ENCODE measurements at regions of chr6 and their contacts with region 1.

Region 1: DNA sequence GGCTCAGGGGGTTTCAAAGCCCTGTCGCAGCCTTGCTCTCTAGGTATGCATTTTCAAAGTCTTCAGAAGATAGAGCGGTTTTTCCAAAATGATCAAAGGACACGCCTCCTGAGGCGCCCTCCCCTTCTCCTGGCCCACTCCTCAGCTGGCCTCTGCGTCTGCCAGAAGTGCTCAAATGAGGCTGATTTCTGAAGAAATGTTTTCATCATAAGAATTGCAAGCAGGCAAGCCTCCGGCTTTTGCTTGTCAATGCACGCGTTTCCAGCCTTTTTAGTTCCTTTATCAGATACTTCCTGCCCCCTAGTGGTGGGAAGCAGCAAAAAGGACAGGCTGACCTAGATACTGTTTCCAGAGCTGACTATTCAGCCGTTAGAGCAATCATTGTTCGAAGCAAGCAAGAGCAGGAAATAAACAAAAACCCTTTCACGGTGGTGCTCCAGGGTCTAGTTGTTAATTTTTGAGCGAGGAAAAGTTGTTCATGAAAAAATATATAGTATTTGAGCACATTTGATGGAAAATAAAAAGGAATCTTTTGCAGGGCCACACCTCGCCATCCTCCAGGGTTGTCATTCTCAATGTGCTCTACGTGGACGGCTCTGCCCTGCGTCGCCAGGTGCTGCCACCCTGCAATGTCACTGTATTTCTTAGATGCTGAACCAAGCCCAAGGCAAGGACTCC is 93.4 kb upstream of the ASF1A start:
- DNase-seq: peak; percentile 95
- H3K4me3 Mint-ChIP-seq: peak overlapping the region; percentile 54
- H3K27ac Mint-ChIP-seq: peak overlapping the region; percentile 46
- H3K4me1 Mint-ChIP-seq: peaks cover 30% of the 10 kb centered on the region
- H3K27me3 Mint-ChIP-seq: no peaks in the 10 kb centered on the region

Region 2: DNA sequence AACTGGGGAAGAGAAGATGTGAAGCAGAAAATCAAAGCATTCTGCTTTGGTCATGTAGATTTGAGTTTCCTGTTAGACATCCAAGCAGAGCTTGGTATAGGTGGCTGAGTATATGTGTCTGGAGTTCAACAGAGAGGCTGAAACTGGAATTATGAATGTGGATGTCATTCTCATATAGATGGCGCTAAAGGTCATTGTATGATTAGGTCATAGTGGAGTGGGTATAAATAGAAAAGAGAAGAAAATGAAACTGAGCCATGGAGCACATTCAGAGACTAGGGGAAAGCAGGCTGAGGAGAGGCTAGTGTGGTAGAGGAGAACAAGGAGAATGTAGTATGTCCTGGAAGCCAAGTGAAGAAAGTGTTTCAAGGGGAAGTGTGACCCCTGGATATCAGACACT is 548.1 kb before region 1 on chr6:
- CTCF ChIA-PET with region 1: no interaction called
- intact Hi-C with region 1: no loop called
- DNase-seq: no peak
- H3K4me3 Mint-ChIP-seq: no peak overlapping the region
- H3K27ac Mint-ChIP-seq: no peak overlapping the region
- H3K4me1 Mint-ChIP-seq: peaks cover 3% of the 10 kb centered on the region
- H3K27me3 Mint-ChIP-seq: peaks cover 3% of the 10 kb centered on the region

Region 3: DNA sequence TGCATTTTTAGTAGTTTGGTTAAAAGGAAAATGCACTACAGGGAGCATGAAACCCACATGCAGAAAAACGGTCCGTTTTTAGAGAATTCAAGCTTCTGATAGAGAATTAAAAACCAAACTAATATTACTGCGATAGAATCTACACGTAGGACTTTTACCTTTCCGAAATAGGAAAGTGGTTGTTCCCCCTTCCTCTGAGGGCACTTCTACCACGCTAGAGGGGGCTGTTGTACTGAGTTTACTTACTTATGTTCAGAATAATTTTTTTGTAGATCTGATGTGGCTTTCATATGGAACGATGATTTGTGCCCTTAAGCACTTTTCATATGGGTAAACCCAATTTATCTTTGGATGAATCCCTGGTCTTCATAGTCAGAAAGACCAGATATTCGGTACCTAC is 516.8 kb before region 1 on chr6:
- CTCF ChIA-PET with region 1: interaction called, 9 read pairs
- intact Hi-C with region 1: loop called (anchors 1 kb)
- DNase-seq: peak; percentile 69
- H3K4me3 Mint-ChIP-seq: no peak overlapping the region
- H3K27ac Mint-ChIP-seq: no peak overlapping the region
- H3K4me1 Mint-ChIP-seq: peaks cover 2% of the 10 kb centered on the region
- H3K27me3 Mint-ChIP-seq: peaks cover 3% of the 10 kb centered on the region

Region 4: GRCh38 chr6:118565311-118565960 is 235.1 kb before region 1 on chr6:
- CTCF ChIA-PET with region 1: interaction called, 23 read pairs
- intact Hi-C with region 1: loop called (anchors 1 kb)
- DNase-seq: peak; percentile 26
- H3K4me3 Mint-ChIP-seq: no peak overlapping the region
- H3K27ac Mint-ChIP-seq: peak overlapping the region; percentile 12
- H3K4me1 Mint-ChIP-seq: peaks cover 28% of the 10 kb centered on the region
- H3K27me3 Mint-ChIP-seq: no peaks in the 10 kb centered on the region

Region 5: GRCh38 chr6:118651282-118652050 is 149.1 kb before region 1 on chr6 and contains the start of gene CEP85L:
- CTCF ChIA-PET with region 1: interaction called, 4 read pairs
- intact Hi-C with region 1: loop called (anchors 2 kb)
- DNase-seq: peak; percentile 90
- H3K4me3 Mint-ChIP-seq: peak within 1 kb of the TSS; percentile 86
- H3K27ac Mint-ChIP-seq: peak within 1 kb of the TSS; percentile 89
- H3K4me1 Mint-ChIP-seq: peaks cover 49% of the 10 kb centered on the region
- H3K27me3 Mint-ChIP-seq: no peaks in the 10 kb centered on the region
- total RNA-seq, gene CEP85L: 31.4 to 31.9 TPM

Region 6: DNA sequence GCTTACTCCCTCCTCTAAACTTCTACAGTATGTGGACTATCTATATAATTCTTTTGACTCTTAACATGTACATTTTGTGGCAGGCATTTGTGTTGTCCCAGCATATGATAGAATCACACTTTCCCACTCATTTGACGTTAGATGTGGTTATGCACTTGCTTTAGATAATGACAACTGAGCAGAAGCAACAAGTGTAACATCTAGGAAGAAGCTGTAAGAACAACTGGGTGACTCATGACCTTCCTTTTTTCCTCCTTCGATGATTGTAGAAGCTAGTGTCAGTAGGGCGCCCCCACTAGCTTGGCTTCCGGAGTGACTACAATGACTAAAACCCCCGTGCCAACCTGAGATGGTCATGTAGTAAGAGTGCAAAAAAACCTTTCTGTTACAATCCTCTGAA is 74.6 kb before region 1 on chr6:
- CTCF ChIA-PET with region 1: interaction called, 5 read pairs
- intact Hi-C with region 1: loop called (anchors 2 kb)
- DNase-seq: peak; percentile 93
- H3K4me3 Mint-ChIP-seq: peak overlapping the region; percentile 26
- H3K27ac Mint-ChIP-seq: peak overlapping the region; percentile 91
- H3K4me1 Mint-ChIP-seq: peaks cover 55% of the 10 kb centered on the region
- H3K27me3 Mint-ChIP-seq: no peaks in the 10 kb centered on the region

Region 7: GRCh38 chr6:118787724-118788423 is 12.7 kb before region 1 on chr6:
- CTCF ChIA-PET with region 1: interaction called, 17 read pairs
- intact Hi-C with region 1: no loop called
- DNase-seq: peak; percentile 27
- H3K4me3 Mint-ChIP-seq: no peak overlapping the region
- H3K27ac Mint-ChIP-seq: no peak overlapping the region
- H3K4me1 Mint-ChIP-seq: peaks cover 47% of the 10 kb centered on the region
- H3K27me3 Mint-ChIP-seq: no peaks in the 10 kb centered on the region

Measured in activated naive CD4-positive, alpha-beta T cell treated with anti-CD3 and anti-CD28 coated beads for 36 hours (primary cell).